Heart right ventricle (tissue), 16 donors: ENCODE measurements at regions of chr1 and their contacts with region 1.

Region 1: DNA sequence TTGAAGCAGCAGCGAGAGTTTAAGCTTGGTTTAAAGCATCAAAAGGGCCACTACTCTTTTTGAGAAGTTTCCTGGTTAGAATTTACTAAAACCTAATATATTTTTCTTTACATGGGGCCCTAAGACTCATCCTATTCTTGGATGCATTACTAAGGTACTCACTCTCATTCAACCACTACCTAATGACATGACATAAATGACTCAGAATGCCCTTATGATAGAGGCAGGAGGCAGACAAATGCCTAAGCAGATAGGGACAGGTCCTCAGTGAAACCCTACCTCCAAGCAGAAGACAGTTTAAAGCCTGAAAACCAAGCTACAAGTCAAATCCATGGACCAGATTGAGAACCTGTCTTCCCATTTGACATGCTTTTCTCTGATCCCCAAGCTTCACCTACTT is 34.3 kb upstream of the SLC35A3 start:
- DNase-seq: no peak
- ATAC-seq: no peak
- H3K4me3 ChIP-seq: no peak overlapping the region
- H3K27ac ChIP-seq: no peak overlapping the region
- H3K4me1 ChIP-seq: no peaks in the 10 kb centered on the region
- H3K27me3 ChIP-seq: peaks cover 0 to 3% (median 0%) of the 10 kb centered on the region in 7 donors
- CTCF ChIP-seq: no peak

Region 2: DNA sequence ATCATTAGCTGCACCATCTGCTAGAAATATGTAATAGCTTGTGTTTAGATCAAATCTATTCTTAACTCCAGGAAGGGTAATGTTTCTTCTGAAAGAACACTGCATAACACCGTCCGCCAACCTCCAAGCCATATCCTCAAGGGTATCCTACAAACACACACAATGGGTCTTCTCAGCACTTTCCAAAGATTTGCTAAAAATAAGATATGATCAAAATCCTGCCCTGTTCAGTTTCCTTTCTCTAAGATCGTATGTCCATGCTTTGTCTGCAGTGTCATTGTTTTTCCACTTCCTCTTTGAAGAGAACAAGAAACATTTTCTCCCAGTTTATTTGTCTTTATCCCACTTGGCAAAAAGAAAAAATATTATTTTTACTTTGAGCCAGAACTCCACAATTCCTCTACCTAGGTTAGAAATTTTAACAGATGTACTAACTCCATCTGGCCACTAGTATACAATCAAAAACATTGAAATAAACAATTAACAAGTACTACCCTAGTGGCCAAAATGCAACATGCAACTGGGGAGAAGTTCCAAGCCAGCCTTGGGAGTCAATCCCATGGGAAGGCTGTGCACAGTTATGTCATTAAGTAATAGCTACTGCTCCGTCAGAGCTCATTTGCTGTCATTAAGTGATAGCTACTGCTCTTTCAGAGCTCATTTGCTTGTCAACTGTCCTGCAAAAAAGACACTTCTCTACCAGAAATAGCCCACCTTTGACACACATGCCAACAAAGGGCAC is 206.9 kb before region 1 on chr1:
- intact Hi-C with region 1: no loop called
- DNase-seq: peak in 1 of 2 donors; percentile 40
- ATAC-seq: peak; percentile 83 to 94 (median 90)
- H3K4me3 ChIP-seq: peak overlapping the region in 6 of 10 donors; percentile 4 to 43 (median 20)
- H3K27ac ChIP-seq: peak overlapping the region; percentile 17 to 84 (median 78)
- H3K4me1 ChIP-seq: peaks cover 0 to 27% (median 21%) of the 10 kb centered on the region in 9 donors
- H3K27me3 ChIP-seq: no peaks in the 10 kb centered on the region
- CTCF ChIP-seq: peak; percentile 16 to 67 (median 49)

Region 3: DNA sequence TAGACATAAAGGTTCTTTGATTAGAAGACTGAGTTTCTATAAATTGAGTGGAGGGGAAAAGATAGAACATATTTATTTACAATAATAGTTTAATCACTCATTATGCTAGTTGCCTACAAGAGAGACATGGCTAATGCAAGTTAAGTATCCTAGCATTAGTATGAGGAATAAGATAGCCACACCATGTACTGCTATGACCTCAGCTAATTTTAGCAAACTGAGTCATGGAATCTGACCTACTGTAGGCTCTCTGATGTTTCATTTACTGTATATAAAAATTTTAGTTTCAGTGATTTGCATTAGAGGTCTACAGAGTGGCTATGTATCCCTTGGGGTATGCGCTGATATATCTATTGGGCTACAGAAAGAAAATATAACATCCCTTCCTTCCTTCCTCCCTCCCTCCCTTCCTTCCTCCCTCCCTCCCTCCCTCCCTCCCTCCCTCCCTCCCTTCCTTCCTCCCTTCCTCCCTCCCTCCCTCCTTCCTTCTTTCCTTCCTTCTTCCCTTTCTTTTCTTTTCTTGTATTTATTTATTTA is 79.6 kb before region 1 on chr1:
- intact Hi-C with region 1: no loop called
- DNase-seq: no peak
- ATAC-seq: peak in 6 of 8 donors; percentile 80 to 95 (median 92)
- H3K4me3 ChIP-seq: no peak overlapping the region
- H3K27ac ChIP-seq: peak overlapping the region in 4 of 10 donors; percentile 31 to 50 (median 36)
- H3K4me1 ChIP-seq: peaks cover 0 to 27% (median 9%) of the 10 kb centered on the region in 9 donors
- H3K27me3 ChIP-seq: no peaks in the 10 kb centered on the region
- CTCF ChIP-seq: no peak

Region 4: DNA sequence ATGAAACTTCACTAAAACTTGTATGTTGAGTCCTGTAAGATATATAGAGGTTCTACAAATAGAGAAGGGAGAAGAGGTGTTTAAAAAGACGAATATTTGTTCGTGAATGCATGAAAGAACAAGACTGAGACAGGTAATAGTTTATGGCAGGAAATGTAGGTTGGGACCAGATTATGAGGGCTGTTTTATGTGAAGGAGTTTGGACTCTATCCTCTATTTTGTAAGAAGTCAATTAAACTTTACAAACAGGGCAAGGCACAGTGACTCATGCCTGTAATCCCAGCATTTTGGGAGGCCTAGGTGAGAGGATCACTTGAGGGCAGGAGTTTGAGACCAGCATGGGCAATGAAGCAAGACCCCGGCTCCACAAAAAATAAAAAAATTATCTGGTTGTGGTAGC is 40.0 kb after region 1 on chr1:
- intact Hi-C with region 1: loop called in 1 of 10 experiments (anchors 5 kb)
- DNase-seq: no peak
- ATAC-seq: no peak
- H3K4me3 ChIP-seq: no peak overlapping the region
- H3K27ac ChIP-seq: no peak overlapping the region
- H3K4me1 ChIP-seq: peaks cover 0 to 11% (median 6%) of the 10 kb centered on the region in 9 donors
- H3K27me3 ChIP-seq: no peaks in the 10 kb centered on the region
- CTCF ChIP-seq: no peak

Region 5: DNA sequence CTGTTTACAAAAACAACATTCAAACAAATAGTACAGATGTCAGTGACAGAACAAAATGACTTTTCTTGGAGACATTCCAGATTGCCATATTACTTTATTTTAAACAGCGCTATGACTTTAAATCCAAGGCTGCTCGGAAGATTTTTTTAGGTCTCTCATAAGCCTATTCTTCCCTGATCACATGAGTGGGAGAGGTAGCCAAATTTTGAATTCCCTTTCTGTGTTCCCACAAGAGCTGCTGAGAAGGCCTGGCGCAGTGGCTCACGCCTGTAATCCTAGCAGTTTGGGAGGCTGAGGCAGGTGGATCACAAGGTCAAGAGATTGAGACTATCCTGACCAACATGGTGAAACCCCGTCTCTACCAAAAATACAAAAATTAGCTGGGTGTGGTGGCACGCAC is 87.9 kb after region 1 on chr1:
- intact Hi-C with region 1: no loop called
- DNase-seq: peak in 1 of 2 donors; percentile 18
- ATAC-seq: peak; percentile 20 to 89 (median 74)
- H3K4me3 ChIP-seq: no peak overlapping the region
- H3K27ac ChIP-seq: peak overlapping the region in 4 of 10 donors; percentile 6 to 40 (median 20)
- H3K4me1 ChIP-seq: no peaks in the 10 kb centered on the region
- H3K27me3 ChIP-seq: no peaks in the 10 kb centered on the region
- CTCF ChIP-seq: no peak